ENCODE measurements at regions of chr12 and their contacts with region 1.

Region 1: GRCh38 chr12:20220339-20220738 is 148.0 kb upstream of the PDE3A start:
- DNase-seq: peak; percentile 36
- ATAC-seq: peak; percentile 73
- H3K4me3 ChIP-seq: no peak overlapping the region
- H3K27ac ChIP-seq: no peak overlapping the region
- H3K4me1 ChIP-seq: no peaks in the 10 kb centered on the region
- H3K27me3 ChIP-seq: no peaks in the 10 kb centered on the region
- CTCF ChIP-seq: peak; percentile 17 to 53 (median 29); a peak in 4 of 6 replicates
- POLR2A ChIP-seq: no peak
- RAD21 ChIP-seq: peak; percentile 66

Region 2: GRCh38 chr12:19675361-19675760 is 545.0 kb before region 1 on chr12:
- CTCF ChIA-PET with region 1: no interaction called
- POLR2A ChIA-PET with region 1: no interaction called
- RAD21 ChIA-PET with region 1: no interaction called
- intact Hi-C with region 1: no loop called
- DNase-seq: no peak
- ATAC-seq: no peak
- H3K4me3 ChIP-seq: no peak overlapping the region
- H3K27ac ChIP-seq: no peak overlapping the region
- H3K4me1 ChIP-seq: no peaks in the 10 kb centered on the region
- H3K27me3 ChIP-seq: no peaks in the 10 kb centered on the region
- CTCF ChIP-seq: no peak
- POLR2A ChIP-seq: no peak
- RAD21 ChIP-seq: no peak

Region 3: DNA sequence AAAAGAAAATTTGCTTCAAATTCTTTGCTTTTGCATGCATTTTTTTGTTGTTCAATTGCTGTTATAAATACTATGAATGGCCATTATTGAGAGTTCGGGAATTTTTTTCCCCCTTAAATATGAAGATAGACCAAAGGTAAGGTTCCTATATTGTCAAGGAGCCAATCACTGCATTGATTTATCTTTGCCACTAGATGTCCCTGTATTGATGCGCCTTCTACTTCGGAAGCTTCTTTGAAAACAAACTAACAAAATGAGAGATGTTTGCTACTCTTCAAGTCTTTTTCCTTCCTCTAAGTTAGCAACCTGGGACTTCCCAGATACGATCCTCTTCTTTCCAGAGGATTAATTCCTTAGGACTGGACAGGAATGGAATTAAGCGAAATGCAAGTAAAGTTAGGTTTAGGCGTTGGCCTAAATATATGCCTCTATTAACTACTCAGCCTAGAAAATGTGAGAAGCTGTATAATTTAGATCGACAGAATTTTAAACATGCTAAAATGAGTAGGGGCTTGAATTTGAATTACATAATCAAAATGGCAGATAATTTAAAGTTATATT is 462.9 kb before region 1 on chr12:
- CTCF ChIA-PET with region 1: interaction called, 3 read pairs
- POLR2A ChIA-PET with region 1: no interaction called
- RAD21 ChIA-PET with region 1: no interaction called
- intact Hi-C with region 1: loop called (anchors 5 kb)
- DNase-seq: peak; percentile 19
- ATAC-seq: peak; percentile 74
- H3K4me3 ChIP-seq: no peak overlapping the region
- H3K27ac ChIP-seq: no peak overlapping the region
- H3K4me1 ChIP-seq: no peaks in the 10 kb centered on the region
- H3K27me3 ChIP-seq: no peaks in the 10 kb centered on the region
- CTCF ChIP-seq: peak; percentile 36 to 77 (median 62); a peak in 5 of 6 replicates
- POLR2A ChIP-seq: no peak
- RAD21 ChIP-seq: peak; percentile 67